ENCODE measurements at regions of chr18 and their contacts with region 1.

Region 1: GRCh38 chr18:58671111-58671631 is at the start of gene MALT1:
- DNase-seq: peak; percentile 96
- H3K4me3 Mint-ChIP-seq: peak within 1 kb of the TSS; percentile 92
- H3K27ac Mint-ChIP-seq: peak within 1 kb of the TSS; percentile 93
- H3K4me1 Mint-ChIP-seq: peaks cover 59% of the 10 kb centered on the region
- H3K27me3 Mint-ChIP-seq: no peaks in the 10 kb centered on the region
- total RNA-seq, gene MALT1: 41.0 to 43.0 TPM

Region 2: GRCh38 chr18:58407649-58408407 is 263.3 kb before region 1 on chr18:
- CTCF ChIA-PET with region 1: no interaction called
- POLR2A ChIA-PET with region 1: no interaction called
- DNase-seq: no peak
- H3K4me3 Mint-ChIP-seq: no peak overlapping the region
- H3K27ac Mint-ChIP-seq: no peak overlapping the region
- H3K4me1 Mint-ChIP-seq: no peaks in the 10 kb centered on the region
- H3K27me3 Mint-ChIP-seq: peaks cover 1% of the 10 kb centered on the region

Region 3: DNA sequence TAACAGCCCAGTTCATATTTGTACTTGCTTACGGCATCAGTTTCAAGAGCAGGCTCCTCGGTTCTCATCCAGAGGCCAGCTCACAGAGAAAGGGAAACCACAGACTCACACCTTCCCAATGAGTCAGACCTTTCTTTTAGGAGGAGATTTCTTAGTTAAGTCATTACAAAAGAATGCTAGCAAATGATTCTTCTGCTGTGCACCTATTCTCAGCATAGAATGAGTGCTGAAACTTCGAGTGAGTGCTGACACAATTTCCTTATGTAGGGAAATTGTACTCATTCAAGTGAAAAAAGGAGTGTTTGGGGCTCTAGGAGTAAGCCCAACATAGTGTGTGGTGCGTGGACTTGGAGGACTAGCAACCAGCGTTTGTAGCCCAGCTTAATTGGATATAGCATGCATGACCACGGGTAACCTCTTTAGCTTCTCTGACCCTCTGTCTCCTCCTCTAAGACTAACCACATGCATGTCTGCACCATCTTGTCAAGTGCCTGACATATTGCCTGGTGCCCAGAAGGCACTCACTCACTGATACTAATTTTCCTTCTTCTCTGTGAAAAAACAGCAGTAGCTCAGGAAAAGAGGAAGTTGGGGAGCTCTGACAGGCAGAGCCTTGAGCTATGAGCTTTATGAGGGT is 129.3 kb before region 1 on chr18:
- CTCF ChIA-PET with region 1: interaction called, 6 read pairs
- POLR2A ChIA-PET with region 1: interaction called, 10 read pairs
- DNase-seq: peak; percentile 61
- H3K4me3 Mint-ChIP-seq: no peak overlapping the region
- H3K27ac Mint-ChIP-seq: peak overlapping the region; percentile 12
- H3K4me1 Mint-ChIP-seq: peaks cover 49% of the 10 kb centered on the region
- H3K27me3 Mint-ChIP-seq: peaks cover 42% of the 10 kb centered on the region

Region 4: GRCh38 chr18:58682429-58683069 is 11.4 kb after region 1 on chr18:
- CTCF ChIA-PET with region 1: interaction called, 12 read pairs
- POLR2A ChIA-PET with region 1: interaction called, 63 read pairs
- DNase-seq: no peak
- H3K4me3 Mint-ChIP-seq: no peak overlapping the region
- H3K27ac Mint-ChIP-seq: no peak overlapping the region
- H3K4me1 Mint-ChIP-seq: peaks cover 22% of the 10 kb centered on the region
- H3K27me3 Mint-ChIP-seq: no peaks in the 10 kb centered on the region

Region 5: GRCh38 chr18:58699551-58699950 is 28.4 kb after region 1 on chr18:
- CTCF ChIA-PET with region 1: interaction called, 4 read pairs
- POLR2A ChIA-PET with region 1: interaction called, 21 read pairs
- DNase-seq: no peak
- H3K4me3 Mint-ChIP-seq: no peak overlapping the region
- H3K27ac Mint-ChIP-seq: no peak overlapping the region
- H3K4me1 Mint-ChIP-seq: peaks cover 33% of the 10 kb centered on the region
- H3K27me3 Mint-ChIP-seq: no peaks in the 10 kb centered on the region

Region 6: DNA sequence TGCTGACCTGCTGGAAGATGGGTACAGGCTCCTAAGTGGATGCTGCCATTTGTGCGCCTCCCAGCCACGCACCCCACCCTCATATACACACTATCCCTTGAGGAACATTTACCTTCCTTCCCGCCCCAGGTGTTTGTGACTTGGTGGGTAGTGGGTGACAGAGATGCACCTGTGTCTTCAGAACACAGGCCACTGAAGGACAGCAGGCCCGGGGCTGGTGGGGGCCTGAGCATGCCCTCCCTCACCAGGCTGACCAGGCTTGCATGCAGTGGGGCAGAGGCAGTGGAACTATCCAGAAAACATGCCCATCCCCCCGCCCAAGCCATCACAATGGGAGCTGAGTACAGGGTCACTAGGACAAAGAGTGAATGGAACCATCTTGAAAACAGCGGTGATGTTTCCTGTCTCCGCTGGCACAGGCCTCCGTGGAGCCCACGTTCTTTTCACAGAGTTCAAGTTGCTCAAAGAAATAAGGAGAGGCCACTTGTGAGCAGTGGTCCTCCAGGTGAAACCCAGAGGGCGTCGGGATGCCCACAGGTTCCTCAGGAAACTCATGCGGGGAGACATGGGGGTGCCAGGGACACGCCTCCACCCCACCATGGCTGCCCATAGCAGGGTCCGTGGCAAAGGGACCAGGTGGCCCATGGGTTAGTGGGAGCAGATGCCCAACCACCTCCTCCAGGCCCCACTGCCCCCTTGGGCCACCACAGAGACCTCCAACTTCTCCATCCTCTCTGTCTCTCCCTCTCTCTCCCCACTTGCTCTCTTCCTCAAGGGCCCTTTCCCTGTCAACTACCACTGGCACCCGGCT is 91.0 kb after region 1 on chr18:
- CTCF ChIA-PET with region 1: interaction called, 26 read pairs
- POLR2A ChIA-PET with region 1: interaction called, 6 read pairs
- DNase-seq: no peak
- H3K4me3 Mint-ChIP-seq: no peak overlapping the region
- H3K27ac Mint-ChIP-seq: no peak overlapping the region
- H3K4me1 Mint-ChIP-seq: peaks cover 15% of the 10 kb centered on the region
- H3K27me3 Mint-ChIP-seq: peaks cover 41% of the 10 kb centered on the region

Measured in activated CD4-positive, alpha-beta memory T cell treated with anti-CD3 and anti-CD28 coated beads, Interleukin-2, amount 10 ng/mL, durations not matched to agents 7 days and 5 days (primary cell).